A673 (cell line): ENCODE measurements at regions of chr1 and their contacts with region 1.

Region 1: GRCh38 chr1:8560611-8561544 is 243.0 kb downstream of the SLC45A1 start:
- DNase-seq: peak; percentile 76
- H3K4me3 ChIP-seq: no peak overlapping the region
- H3K27ac ChIP-seq: peak overlapping the region; percentile 75
- H3K4me1 ChIP-seq: peaks cover 72% of the 10 kb centered on the region
- H3K27me3 ChIP-seq: no peaks in the 10 kb centered on the region
- CTCF ChIP-seq: peak; percentile 93

Region 2: DNA sequence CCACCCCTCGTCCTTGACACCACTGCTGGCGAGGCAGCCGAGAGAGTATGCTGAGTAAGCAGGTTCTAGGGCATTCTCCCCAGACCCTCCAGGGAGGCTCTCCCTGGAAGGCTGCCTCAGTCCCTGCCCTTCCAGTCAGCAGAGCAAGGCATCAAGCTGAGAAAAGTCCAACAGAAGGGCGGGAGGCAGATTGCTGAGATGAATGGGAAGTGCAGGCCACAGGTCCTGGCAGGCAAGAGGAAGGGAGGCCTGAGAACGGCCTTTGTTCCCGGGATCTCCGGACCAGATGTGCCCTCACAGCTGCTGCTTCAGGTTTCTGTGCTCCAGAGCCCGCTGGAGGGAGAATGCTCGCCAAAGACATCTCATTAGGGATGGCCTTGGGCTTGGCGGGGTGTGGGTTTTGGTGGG is 1059.8 kb before region 1 on chr1:
- CTCF ChIA-PET with region 1: no interaction called
- POLR2A ChIA-PET with region 1: no interaction called
- intact Hi-C with region 1: no loop called
- DNase-seq: no peak
- H3K4me3 ChIP-seq: no peak overlapping the region
- H3K27ac ChIP-seq: no peak overlapping the region
- H3K4me1 ChIP-seq: peaks cover 18% of the 10 kb centered on the region
- H3K27me3 ChIP-seq: no peaks in the 10 kb centered on the region
- CTCF ChIP-seq: no peak

Region 3: DNA sequence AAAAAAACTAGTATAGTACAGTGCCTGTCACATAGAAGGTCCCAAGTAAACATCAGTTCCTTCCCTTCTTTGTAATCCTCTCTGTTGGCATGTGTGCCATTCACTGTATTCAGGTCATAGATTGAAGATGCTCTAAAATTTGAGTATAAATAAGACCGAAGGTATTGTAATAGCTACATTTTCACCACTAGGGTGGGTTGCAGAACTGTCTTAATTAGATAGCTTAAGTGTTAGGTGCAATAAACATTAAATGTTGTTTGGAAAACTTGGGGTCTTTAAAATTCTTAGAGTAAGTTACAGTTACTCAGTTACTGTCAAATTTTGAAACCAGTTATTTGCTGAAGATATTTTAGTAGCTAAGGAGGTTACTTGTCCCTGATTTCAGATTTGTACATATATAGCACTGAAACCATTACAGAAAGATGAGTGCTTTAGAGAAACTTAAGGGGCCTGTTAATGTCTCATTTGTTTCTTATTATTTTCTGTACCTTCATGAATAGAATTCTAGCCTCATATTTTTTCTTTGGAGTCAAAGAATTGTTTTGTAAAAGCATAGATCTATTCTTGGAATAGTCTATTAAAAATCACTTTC is 752.5 kb before region 1 on chr1:
- CTCF ChIA-PET with region 1: no interaction called
- POLR2A ChIA-PET with region 1: no interaction called
- intact Hi-C with region 1: no loop called
- DNase-seq: peak; percentile 65
- H3K4me3 ChIP-seq: no peak overlapping the region
- H3K27ac ChIP-seq: no peak overlapping the region
- H3K4me1 ChIP-seq: no peaks in the 10 kb centered on the region
- H3K27me3 ChIP-seq: no peaks in the 10 kb centered on the region
- CTCF ChIP-seq: peak; percentile 72

Region 4: GRCh38 chr1:8580566-8580965 is 19.7 kb after region 1 on chr1:
- CTCF ChIA-PET with region 1: no interaction called
- POLR2A ChIA-PET with region 1: no interaction called
- intact Hi-C with region 1: no loop called
- DNase-seq: no peak
- H3K4me3 ChIP-seq: no peak overlapping the region
- H3K27ac ChIP-seq: peak overlapping the region; percentile 43
- H3K4me1 ChIP-seq: peaks cover 79% of the 10 kb centered on the region
- H3K27me3 ChIP-seq: no peaks in the 10 kb centered on the region
- CTCF ChIP-seq: no peak

Region 5: DNA sequence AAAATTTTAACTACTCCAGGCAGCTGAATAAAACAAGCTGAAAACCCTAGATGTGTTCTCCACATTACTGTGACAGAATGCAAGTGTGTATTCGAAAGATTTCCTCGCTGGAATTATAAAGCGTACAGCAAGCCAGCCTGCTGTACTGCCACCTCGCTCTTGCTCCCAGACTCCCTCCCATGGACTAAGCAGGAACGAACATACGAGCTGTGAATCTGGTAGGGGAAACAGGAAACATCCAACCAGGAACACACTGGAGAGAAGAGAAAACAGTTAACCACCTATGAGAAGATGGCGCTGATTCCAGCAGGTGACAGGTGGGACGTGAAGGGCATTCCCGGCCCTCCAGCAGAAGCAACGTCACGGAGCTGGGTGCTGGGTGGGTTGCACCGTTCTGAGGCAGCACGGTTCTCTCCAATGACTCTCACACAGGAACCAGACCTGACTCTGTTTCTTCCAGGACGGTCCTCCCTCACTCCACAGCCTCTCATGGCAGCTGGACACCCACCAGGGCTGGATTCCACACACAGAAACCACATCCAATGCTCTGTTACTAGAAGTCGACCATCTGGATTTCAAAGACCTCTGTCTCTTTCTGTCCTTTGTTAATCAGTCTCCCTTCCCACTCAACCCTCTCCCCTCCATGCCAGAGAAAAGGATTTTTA is 37.3 kb after region 1 on chr1:
- CTCF ChIA-PET with region 1: interaction called, 8 read pairs
- POLR2A ChIA-PET with region 1: no interaction called
- intact Hi-C with region 1: loop called (anchors 5 kb)
- DNase-seq: peak; percentile 90
- H3K4me3 ChIP-seq: peak overlapping the region; percentile 16
- H3K27ac ChIP-seq: peak overlapping the region; percentile 98
- H3K4me1 ChIP-seq: peaks cover 88% of the 10 kb centered on the region
- H3K27me3 ChIP-seq: no peaks in the 10 kb centered on the region
- CTCF ChIP-seq: peak; percentile 77

Region 6: DNA sequence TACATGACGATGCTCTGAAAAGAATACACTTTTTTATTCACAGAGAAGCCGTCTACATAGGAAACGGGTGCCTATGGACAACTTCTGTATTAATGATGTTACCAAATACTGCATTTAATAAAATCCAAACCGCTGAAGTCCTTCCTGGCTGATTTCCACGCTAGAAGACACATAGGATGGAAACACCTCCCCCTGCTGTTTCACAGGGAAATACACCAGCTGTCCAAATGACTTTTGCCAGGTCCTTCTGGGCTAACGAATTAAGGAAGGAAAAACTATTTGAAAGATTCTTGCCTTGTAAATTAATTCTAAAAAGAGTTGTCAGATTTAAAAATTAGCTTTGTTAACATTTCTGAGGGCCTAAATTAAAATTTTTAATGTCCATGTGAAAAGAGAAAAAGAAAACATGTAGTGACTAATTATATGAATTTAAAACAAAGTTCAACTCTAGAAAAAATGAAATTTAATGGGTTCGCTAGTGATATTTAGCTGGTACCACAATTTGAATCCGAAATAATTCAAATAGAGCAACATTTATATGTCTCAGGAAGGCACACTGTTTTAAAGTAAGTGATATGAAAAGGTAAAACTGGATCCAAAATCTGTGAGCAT is 110.5 kb after region 1 on chr1:
- CTCF ChIA-PET with region 1: interaction called, 3 read pairs
- POLR2A ChIA-PET with region 1: no interaction called
- intact Hi-C with region 1: loop called (anchors 1 kb)
- DNase-seq: peak; percentile 89
- H3K4me3 ChIP-seq: no peak overlapping the region
- H3K27ac ChIP-seq: peak overlapping the region; percentile 83
- H3K4me1 ChIP-seq: peaks cover 95% of the 10 kb centered on the region
- H3K27me3 ChIP-seq: no peaks in the 10 kb centered on the region
- CTCF ChIP-seq: peak; percentile 91

Region 7: GRCh38 chr1:8727809-8728213 is 166.9 kb after region 1 on chr1:
- CTCF ChIA-PET with region 1: interaction called, 14 read pairs
- POLR2A ChIA-PET with region 1: no interaction called
- intact Hi-C with region 1: loop called (anchors 1 kb)
- DNase-seq: peak; percentile 27
- H3K4me3 ChIP-seq: no peak overlapping the region
- H3K27ac ChIP-seq: peak overlapping the region; percentile 55
- H3K4me1 ChIP-seq: peaks cover 38% of the 10 kb centered on the region
- H3K27me3 ChIP-seq: no peaks in the 10 kb centered on the region
- CTCF ChIP-seq: no peak

Region 8: GRCh38 chr1:8742022-8742924 is 181.4 kb after region 1 on chr1:
- CTCF ChIA-PET with region 1: no interaction called
- POLR2A ChIA-PET with region 1: interaction called, 11 read pairs
- intact Hi-C with region 1: no loop called
- DNase-seq: no peak
- H3K4me3 ChIP-seq: no peak overlapping the region
- H3K27ac ChIP-seq: no peak overlapping the region
- H3K4me1 ChIP-seq: peaks cover 4% of the 10 kb centered on the region
- H3K27me3 ChIP-seq: no peaks in the 10 kb centered on the region
- CTCF ChIP-seq: no peak

Region 9: DNA sequence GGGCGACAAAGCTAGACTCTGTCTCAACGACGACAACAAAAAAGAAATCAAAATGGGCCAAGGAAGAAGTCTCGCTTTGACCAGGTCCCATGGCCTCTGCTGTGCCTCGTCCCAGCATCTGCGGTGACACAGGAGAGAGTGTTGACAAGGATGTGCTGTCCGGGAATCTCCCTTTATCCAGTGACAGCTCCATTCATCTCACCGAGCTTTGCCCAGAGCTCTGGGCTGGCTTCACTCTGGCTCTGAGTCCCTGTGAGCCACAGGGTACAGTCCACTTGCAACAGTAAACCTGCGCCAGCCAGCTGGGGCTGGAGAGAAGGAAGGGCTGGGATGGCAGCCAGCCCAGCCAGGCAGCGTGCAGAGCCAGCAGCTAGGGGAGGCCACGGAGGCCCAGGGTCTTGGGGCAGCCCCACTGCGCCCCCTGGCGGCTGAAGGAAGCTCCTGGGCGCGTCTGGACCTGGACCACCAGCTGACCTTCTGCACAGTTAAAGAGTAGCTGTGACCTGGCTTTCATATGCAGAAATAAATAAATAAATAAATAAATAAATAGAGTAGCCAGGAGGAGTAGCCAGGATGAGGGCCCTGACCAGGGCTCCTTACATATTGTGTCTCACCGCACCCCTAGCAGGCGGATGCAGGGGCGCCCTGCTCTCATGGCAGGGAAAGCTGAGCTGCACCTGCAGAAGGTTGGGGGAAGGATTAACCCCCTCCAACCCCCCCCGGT is 287.9 kb after region 1 on chr1:
- CTCF ChIA-PET with region 1: interaction called, 13 read pairs
- POLR2A ChIA-PET with region 1: no interaction called
- intact Hi-C with region 1: loop called (anchors 2 kb)
- DNase-seq: peak; percentile 92
- H3K4me3 ChIP-seq: no peak overlapping the region
- H3K27ac ChIP-seq: no peak overlapping the region
- H3K4me1 ChIP-seq: peaks cover 8% of the 10 kb centered on the region
- H3K27me3 ChIP-seq: no peaks in the 10 kb centered on the region
- CTCF ChIP-seq: peak; percentile 90